ENCODE measurements at regions of chr1 and their contacts with region 1.

Region 1: GRCh38 chr1:54944610-54945544 is 35.6 kb upstream of the TMEM61 start:
- DNase-seq: peak; percentile 84
- ATAC-seq: peak; percentile 82
- H3K4me3 Mint-ChIP-seq: peak overlapping the region; percentile 12
- H3K27ac Mint-ChIP-seq: peak overlapping the region; percentile 54
- H3K4me1 Mint-ChIP-seq: peaks cover 19% of the 10 kb centered on the region
- H3K27me3 Mint-ChIP-seq: peaks cover 13% of the 10 kb centered on the region

Region 2: DNA sequence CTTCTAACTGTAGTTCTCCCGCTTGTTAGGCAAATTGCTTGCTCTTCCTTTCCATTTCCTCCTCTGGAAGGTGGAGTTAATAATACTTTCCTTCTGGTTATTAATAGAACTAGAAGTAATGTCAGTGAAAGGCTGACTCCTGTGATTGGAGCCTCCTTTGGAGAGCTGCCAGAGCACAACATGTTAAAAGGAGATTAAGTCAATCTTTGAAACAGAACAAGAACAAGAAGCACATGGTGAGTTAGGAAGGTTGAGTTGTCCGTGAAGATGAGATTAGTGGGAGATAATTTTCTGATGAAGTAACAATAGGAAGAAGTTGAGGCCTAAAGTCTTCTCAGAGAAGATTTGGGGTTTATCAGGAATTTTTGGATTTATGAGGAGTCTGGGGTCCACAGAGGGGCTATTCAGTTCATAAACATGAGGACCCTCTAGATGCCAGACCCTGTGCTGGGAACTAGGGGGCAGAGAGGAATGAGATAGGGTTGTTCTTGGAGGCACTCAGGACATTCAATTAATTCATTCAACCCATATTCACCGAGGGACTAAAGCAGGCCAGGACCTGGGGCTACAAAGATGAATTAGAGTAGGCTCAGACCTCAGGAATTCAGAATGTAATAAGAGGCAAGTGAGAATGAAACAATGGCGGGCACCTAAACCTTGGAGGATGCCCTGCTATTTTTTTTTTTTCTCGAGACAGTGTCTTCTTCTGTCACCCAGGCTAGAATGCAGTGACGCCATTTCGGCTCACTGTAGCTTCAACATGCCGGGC is 17.2 kb before region 1 on chr1:
- CTCF ChIA-PET with region 1: interaction called, 36 read pairs
- POLR2A ChIA-PET with region 1: interaction called, 3 read pairs
- DNase-seq: no peak
- ATAC-seq: no peak
- H3K4me3 Mint-ChIP-seq: no peak overlapping the region
- H3K27ac Mint-ChIP-seq: no peak overlapping the region
- H3K4me1 Mint-ChIP-seq: no peaks in the 10 kb centered on the region
- H3K27me3 Mint-ChIP-seq: peaks cover 19% of the 10 kb centered on the region

Region 3: DNA sequence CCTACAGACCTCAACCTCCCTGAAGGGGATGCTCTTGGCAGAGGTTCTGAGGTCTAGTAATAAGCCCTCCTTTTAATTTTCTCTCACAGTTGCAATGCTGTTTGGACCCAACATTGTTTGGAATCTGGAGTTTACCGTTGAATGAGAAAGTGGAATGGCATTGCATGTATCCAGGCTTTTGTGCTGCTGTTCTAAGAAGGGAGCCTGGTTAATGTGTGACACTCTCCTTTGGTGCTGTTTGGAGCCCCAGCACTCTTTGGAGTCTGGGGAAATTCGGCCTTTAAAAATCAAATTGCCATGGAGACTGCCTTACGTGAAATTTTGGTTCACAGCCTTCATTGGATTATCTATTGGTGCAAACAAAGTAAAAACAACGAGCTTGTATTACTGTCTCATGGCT is 11.8 kb after region 1 on chr1:
- CTCF ChIA-PET with region 1: interaction called, 14 read pairs
- POLR2A ChIA-PET with region 1: no interaction called
- DNase-seq: no peak
- ATAC-seq: no peak
- H3K4me3 Mint-ChIP-seq: no peak overlapping the region
- H3K27ac Mint-ChIP-seq: no peak overlapping the region
- H3K4me1 Mint-ChIP-seq: no peaks in the 10 kb centered on the region
- H3K27me3 Mint-ChIP-seq: peaks cover 25% of the 10 kb centered on the region

Region 4: DNA sequence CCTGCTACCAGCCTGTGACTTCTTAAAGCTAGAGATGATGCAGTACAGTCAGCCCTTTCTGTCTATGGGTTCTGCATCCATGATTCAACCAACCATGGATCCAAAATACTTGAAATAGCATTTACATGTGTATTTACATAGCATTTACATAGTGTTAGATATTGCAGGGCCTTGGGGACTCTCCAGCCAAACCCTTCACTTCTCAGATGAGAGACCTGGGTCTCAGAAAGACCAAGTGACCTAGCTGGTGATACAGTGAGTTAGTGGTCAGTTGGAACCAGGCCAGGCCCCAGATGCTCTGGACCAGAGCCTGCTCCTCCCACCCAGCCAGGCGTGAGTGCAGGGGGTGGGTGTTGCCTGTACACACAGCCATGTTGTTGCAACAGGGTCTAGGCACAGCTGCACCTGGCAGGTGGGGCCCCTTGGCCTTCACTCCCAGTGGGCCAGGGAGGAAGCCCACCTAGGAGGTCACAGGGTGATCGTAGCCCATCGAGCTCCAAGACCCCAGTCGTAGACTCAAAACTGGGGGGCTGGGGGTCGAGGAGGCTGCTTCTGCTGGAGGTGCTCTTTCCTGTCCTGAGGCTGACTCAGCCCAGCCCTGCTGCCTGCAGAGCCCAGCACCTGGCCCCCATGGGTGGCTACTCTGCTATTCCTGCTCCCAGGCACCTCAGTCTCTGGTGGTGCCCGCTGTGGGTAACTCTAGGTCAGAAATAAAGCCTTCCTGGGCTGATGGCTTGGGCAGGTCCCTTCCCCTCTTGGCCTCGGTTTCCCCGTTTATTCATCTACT is 43.2 kb after region 1 on chr1:
- CTCF ChIA-PET with region 1: interaction called, 10 read pairs
- POLR2A ChIA-PET with region 1: no interaction called
- DNase-seq: no peak
- ATAC-seq: no peak
- H3K4me3 Mint-ChIP-seq: no peak overlapping the region
- H3K27ac Mint-ChIP-seq: no peak overlapping the region
- H3K4me1 Mint-ChIP-seq: peaks cover 4% of the 10 kb centered on the region
- H3K27me3 Mint-ChIP-seq: peaks cover 17% of the 10 kb centered on the region

Region 5: GRCh38 chr1:55021965-55022546 is 77.2 kb after region 1 on chr1:
- CTCF ChIA-PET with region 1: interaction called, 94 read pairs
- POLR2A ChIA-PET with region 1: no interaction called
- DNase-seq: peak; percentile 78
- ATAC-seq: peak; percentile 99
- H3K4me3 Mint-ChIP-seq: no peak overlapping the region
- H3K27ac Mint-ChIP-seq: no peak overlapping the region
- H3K4me1 Mint-ChIP-seq: peaks cover 3% of the 10 kb centered on the region
- H3K27me3 Mint-ChIP-seq: peaks cover 3% of the 10 kb centered on the region